ENCODE measurements at regions of chr3 and their contacts with region 1.

Region 1: GRCh38 chr3:11643605-11644087 is at the start of gene VGLL4:
- DNase-seq: peak; percentile 87

Region 2: GRCh38 chr3:11385891-11386290 is 257.8 kb before region 1 on chr3:
- in situ Hi-C with region 1: loop called (anchors 10 kb)
- DNase-seq: peak; percentile 49

Region 3: GRCh38 chr3:11465744-11466616 is 177.7 kb before region 1 on chr3:
- in situ Hi-C with region 1: no loop called
- DNase-seq: no peak

Region 4: DNA sequence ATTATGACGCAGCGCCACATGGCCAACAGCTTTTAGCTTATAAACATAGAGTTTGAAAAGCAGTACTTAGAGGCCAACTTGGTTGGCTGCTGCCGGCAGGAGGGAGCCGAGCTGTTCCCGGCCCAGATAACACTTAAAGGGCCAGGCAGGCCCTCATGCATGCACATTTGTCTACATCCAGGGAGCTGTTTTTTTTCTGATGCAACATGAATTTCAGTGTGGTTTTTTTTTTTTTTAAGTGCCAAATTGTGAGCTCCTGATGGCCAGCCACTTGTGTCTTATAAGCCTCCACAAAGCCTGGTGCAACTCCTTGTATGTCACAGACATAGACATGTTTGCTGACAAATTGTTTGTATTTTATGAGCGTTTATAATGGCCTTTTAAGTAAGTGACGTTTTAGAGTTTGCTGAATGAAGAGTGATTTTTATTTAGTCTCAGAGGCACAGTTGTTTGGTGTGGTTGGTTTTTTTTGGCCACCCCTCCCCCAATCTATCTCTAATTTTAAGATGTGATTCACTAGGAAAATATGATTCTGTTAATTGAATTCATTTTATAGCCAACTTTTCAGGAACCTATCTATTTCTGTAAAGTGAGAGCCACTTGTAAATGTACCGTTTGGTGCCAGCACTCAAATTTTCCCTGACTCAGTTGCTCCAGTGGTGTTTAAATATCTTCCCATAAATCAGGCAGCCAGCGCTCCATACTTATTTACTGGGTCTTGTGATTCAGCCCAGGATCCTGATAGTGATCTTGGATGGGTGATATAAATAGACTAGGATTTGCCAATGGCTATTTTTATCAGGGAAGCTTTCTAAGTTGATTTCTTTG is 134.3 kb before region 1 on chr3:
- in situ Hi-C with region 1: no loop called
- DNase-seq: no peak